ENCODE measurements at regions of chrX and their contacts with region 1.

Region 1: DNA sequence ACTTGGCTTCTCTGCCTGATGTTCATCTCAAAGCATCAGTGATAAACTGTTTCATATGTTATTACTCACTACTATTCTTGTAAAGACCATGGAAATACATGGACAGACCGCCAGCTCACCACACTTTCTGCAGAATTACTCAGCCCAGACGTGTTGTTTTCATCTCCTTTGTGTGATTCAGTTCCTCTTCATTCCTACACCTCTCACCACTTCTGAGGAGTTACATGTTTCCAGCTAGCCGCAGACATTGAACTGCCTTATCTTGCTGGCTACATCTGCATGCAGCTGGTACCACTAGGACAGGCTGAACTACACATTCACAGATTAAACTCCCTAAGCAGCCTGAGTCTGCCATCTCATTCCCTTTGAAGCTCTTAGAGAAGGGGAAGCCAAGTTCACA is 443.2 kb upstream of the FGF16 start:
- DNase-seq: peak; percentile 70
- ATAC-seq: peak; percentile 94
- H3K4me3 Mint-ChIP-seq: no peak overlapping the region
- H3K27ac Mint-ChIP-seq: peak overlapping the region; percentile 80
- H3K4me1 Mint-ChIP-seq: peaks cover 22% of the 10 kb centered on the region
- H3K27me3 Mint-ChIP-seq: peaks cover 2% of the 10 kb centered on the region

Region 2: GRCh38 chrX:76971393-76972376 is 32.3 kb before region 1 on chrX:
- CTCF ChIA-PET with region 1: interaction called, 3 read pairs
- POLR2A ChIA-PET with region 1: interaction called, 3 read pairs
- intact Hi-C with region 1: loop called (anchors 1 kb)
- DNase-seq: no peak
- ATAC-seq: peak; percentile 78
- H3K4me3 Mint-ChIP-seq: no peak overlapping the region
- H3K27ac Mint-ChIP-seq: peak overlapping the region; percentile 81
- H3K4me1 Mint-ChIP-seq: peaks cover 7% of the 10 kb centered on the region
- H3K27me3 Mint-ChIP-seq: no peaks in the 10 kb centered on the region

Region 3: DNA sequence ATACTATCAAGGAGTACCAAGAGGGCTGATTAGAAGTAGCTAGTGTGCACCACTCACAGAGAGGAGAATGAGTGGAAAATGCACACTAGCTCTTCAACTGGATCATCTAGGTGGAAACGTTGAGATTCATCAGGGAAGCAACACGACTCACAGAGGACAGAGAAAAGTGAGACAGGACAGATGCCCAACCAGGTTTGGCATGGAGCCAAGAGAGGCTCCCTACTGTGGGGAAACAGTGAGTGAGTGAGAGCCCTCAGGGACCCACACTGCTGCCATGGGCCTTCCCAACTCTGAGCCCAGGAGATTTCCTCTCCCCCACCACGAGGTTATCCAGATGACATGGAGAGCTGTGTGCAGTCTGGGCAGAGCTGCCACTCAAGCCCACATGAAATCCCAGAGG is 270.3 kb after region 1 on chrX:
- CTCF ChIA-PET with region 1: no interaction called
- POLR2A ChIA-PET with region 1: no interaction called
- intact Hi-C with region 1: no loop called
- DNase-seq: no peak
- ATAC-seq: no peak
- H3K4me3 Mint-ChIP-seq: no peak overlapping the region
- H3K27ac Mint-ChIP-seq: no peak overlapping the region
- H3K4me1 Mint-ChIP-seq: no peaks in the 10 kb centered on the region
- H3K27me3 Mint-ChIP-seq: no peaks in the 10 kb centered on the region